IMR-90 (cell line): ENCODE measurements at regions of chr4 and their contacts with region 1.

Region 1: GRCh38 chr4:79317711-79318110 is 8.2 kb downstream of the NAA11 start:
- DNase-seq: no peak
- ATAC-seq: no peak
- H3K4me3 ChIP-seq: no peak overlapping the region
- H3K27ac ChIP-seq: no peak overlapping the region
- H3K4me1 ChIP-seq: no peaks in the 10 kb centered on the region
- H3K27me3 ChIP-seq: no peaks in the 10 kb centered on the region
- CTCF ChIP-seq: no peak
- POLR2A ChIP-seq: no peak
- RAD21 ChIP-seq: no peak

Region 2: DNA sequence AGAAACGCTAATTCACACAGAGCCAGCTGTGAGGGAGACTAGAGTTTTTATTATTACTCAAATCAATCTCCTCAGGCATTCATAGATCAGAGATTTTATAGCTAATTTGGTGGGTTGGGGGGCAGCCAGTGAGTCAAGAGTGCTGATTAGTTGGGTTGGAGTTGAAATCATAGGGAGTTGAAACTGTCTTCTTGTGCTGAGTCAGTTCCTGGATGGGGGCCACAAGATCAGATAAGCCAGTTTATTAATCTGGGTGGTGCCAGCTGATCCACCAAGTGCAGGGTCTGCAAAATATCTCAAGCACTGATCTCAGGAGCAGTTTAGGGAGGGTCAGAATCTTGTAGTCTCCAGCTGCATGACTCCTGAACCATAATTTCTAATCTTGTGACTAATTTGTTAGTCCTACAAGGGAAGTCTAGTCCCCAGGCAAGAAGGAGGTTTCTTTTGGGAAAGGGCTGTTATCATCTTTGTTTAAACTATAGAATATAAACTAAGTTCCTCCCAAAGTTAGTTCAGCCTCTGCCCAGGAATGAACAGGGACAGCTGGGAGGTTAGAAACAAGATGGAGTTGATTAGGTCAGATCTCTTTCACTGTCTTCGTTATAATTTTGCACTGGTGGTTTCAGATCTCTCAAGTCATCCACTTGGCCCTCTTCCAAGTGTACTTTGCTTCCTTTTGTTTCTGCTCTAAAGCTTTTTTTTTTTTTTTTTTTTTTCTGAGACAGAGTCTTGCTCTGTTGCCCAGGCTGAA is 13.6 kb after region 1 on chr4:
- CTCF ChIA-PET with region 1: interaction called, 5 read pairs
- POLR2A ChIA-PET with region 1: no interaction called
- dilution Hi-C with region 1: no loop called
- in situ Hi-C with region 1: no loop called
- intact Hi-C with region 1: loop called (anchors 1 kb)
- DNase-seq: no peak
- ATAC-seq: peak; percentile 44
- H3K4me3 ChIP-seq: no peak overlapping the region
- H3K27ac ChIP-seq: no peak overlapping the region
- H3K4me1 ChIP-seq: no peaks in the 10 kb centered on the region
- H3K27me3 ChIP-seq: no peaks in the 10 kb centered on the region
- CTCF ChIP-seq: no peak
- POLR2A ChIP-seq: no peak
- RAD21 ChIP-seq: no peak